ENCODE measurements at regions of chr9 and their contacts with region 1.

Region 1: GRCh38 chr9:95268681-95269080 is 48.8 kb downstream of the FANCC start:
- DNase-seq: peak; percentile 58
- H3K4me3 ChIP-seq: no peak overlapping the region
- H3K27ac ChIP-seq: no peak overlapping the region
- H3K4me1 ChIP-seq: peaks cover 7% of the 10 kb centered on the region
- H3K27me3 ChIP-seq: no peaks in the 10 kb centered on the region
- CTCF ChIP-seq: peak; percentile 61

Region 2: DNA sequence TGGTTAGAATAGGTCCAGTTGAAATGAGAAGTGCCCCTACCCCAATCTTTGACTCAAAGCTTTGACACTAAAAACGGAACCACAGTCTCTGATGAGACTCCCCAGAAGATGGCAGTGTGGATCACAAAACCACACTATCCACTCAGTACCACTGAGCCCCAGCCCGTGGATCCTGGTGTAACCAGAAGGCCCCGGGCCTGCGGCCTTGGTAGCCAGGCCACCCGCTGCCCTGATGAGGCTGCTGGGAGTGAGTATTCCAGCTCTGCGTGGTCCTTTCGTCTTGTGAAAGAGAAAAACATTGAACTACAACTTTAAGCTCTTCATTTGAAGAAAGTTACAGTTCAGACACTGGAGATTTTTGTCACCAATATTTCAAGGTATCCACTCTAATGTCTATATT is 587.2 kb before region 1 on chr9:
- CTCF ChIA-PET with region 1: no interaction called
- POLR2A ChIA-PET with region 1: no interaction called
- intact Hi-C with region 1: loop called (anchors 10 kb)
- DNase-seq: peak; percentile 77
- H3K4me3 ChIP-seq: no peak overlapping the region
- H3K27ac ChIP-seq: no peak overlapping the region
- H3K4me1 ChIP-seq: no peaks in the 10 kb centered on the region
- H3K27me3 ChIP-seq: no peaks in the 10 kb centered on the region
- CTCF ChIP-seq: peak; percentile 81

Region 3: DNA sequence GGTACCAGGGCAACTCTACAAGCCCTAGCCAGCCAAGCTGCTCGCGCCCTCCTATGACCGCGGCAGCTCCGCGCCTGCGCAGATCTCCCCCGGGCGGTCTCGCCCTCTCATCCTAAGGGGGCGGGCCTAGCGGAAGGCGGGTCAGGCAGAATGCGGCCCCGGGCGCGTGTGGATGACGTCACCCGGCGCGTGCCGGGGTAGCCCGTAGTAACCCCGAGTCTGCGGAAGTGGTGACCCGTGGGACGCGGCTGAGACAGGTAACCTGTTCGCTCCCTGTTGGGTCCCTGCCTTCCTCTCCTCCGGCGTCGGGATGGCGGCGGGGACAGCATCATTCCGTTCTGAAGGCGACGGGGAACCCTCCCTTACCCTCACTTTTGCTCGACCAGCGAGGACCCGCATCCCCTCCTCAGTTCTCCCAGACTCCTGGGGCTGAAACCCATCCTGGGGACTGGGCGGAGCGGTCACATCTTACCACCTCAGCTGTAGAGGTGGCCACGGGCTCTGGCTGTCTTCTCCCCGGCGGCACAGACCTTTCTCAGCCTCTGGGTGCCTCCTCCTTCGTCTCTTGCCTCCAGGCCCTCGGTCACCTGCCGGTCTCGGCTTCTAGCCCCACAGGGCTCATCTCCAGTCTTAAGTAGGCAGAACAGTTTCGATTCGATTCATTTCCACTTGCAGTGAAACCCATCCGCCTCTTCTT is 542.0 kb before region 1 on chr9 and contains the start of gene AOPEP:
- CTCF ChIA-PET with region 1: no interaction called
- POLR2A ChIA-PET with region 1: no interaction called
- intact Hi-C with region 1: no loop called
- DNase-seq: peak; percentile 97
- H3K4me3 ChIP-seq: peak within 1 kb of the TSS; percentile 70
- H3K27ac ChIP-seq: peak within 1 kb of the TSS; percentile 69
- H3K4me1 ChIP-seq: peaks cover 4% of the 10 kb centered on the region
- H3K27me3 ChIP-seq: no peaks in the 10 kb centered on the region
- CTCF ChIP-seq: no peak
- total RNA-seq, gene AOPEP: 17.5 and 18.4 TPM in 2 replicates

Region 4: GRCh38 chr9:95305770-95306492 is 37.2 kb after region 1 on chr9:
- CTCF ChIA-PET with region 1: interaction called, 12 read pairs
- POLR2A ChIA-PET with region 1: no interaction called
- intact Hi-C with region 1: no loop called
- DNase-seq: peak; percentile 45
- H3K4me3 ChIP-seq: peak overlapping the region; percentile 1
- H3K27ac ChIP-seq: no peak overlapping the region
- H3K4me1 ChIP-seq: peaks cover 23% of the 10 kb centered on the region
- H3K27me3 ChIP-seq: no peaks in the 10 kb centered on the region
- CTCF ChIP-seq: no peak

Region 5: DNA sequence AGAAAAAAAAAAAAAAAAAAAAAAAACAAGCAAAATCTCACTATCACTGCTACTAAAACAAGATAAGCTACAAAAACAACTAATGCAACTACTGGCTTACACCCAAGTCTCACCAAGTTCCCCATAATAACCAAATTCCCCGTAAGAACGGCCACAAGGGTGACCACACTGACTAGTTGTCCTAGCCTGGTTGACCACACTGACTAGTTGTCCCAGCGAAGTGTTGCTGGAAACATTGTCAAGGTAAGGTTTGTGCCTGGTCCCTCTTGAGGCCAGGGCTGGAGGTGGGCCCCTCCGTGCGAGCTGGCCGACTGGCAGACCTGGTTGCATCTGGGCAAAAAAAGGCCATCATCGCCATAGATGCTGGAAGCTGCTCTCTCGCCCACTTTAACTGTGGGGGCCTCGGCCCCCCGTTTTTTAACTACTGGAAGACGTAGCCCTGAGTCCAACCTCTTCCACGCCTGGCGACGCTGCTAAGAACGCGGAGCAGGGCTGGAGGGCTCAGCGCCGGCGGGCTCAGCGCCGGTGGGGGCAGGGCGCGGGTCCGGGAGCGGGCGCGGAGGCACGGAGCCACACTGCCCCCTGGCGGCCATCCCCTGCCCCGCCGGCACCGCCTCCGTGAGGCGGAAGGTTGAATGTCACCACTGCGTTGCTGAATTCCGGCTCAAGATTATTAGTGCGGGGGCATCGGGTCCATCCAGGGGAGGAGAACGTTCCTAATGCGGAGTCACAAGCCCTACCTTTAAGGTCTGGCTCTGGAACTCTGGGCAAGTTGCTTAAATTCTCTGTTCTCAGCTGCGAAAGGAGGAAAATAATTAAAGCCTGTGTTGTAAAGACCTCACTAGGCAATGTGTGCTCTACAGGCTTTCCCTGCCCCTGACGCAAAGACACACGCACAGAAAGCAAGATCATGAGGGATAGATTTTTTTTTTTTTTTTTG is 949.3 kb after region 1 on chr9:
- CTCF ChIA-PET with region 1: no interaction called
- POLR2A ChIA-PET with region 1: no interaction called
- intact Hi-C with region 1: no loop called
- DNase-seq: peak; percentile 77
- H3K4me3 ChIP-seq: peak overlapping the region; percentile 23
- H3K27ac ChIP-seq: no peak overlapping the region
- H3K4me1 ChIP-seq: no peaks in the 10 kb centered on the region
- H3K27me3 ChIP-seq: peaks cover 4% of the 10 kb centered on the region
- CTCF ChIP-seq: peak; percentile 89

Measured in A673 (cell line).